PC-9 (cell line): ENCODE measurements at regions of chr2 and their contacts with region 1.

Region 1: GRCh38 chr2:157182834-157183396 is 74.6 kb upstream of the GALNT5 start:
- DNase-seq: peak in 1 of 2 experiments; percentile 36
- H3K4me3 ChIP-seq: no peak overlapping the region
- H3K27ac ChIP-seq: no peak overlapping the region
- H3K4me1 ChIP-seq: no peaks in the 10 kb centered on the region; the same call in 1 of the 2 replicates
- H3K27me3 ChIP-seq: no peaks in the 10 kb centered on the region
- CTCF ChIP-seq: no peak

Region 2: DNA sequence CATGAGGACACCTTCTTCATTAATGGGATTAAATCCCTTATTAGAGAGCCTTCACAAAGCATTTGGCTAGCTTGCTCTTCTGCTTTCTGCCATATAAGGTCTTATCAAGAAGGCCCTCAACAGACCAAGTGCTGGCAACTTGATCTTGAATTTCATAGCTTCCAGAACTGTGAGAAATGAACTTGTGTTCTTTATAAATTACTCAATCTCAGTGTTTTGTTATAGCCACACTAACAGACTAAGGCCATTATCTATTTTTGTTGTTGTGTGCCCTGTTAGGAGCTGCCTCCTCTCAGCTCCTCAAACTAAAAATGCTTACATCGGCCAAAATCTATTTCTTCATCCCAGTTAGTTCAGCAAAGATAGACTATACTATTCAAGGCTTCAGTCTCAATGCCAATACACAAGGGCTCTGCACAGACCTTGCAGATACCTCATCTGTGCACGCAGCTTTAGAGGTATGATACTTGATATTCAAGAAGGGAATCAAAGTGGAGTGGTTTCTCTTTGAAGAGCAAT is 563.8 kb before region 1 on chr2:
- CTCF ChIA-PET with region 1: no interaction called
- POLR2A ChIA-PET with region 1: interaction called, 10 read pairs
- intact Hi-C with region 1: no loop called
- DNase-seq: no peak
- H3K4me3 ChIP-seq: no peak overlapping the region
- H3K27ac ChIP-seq: no peak overlapping the region
- H3K4me1 ChIP-seq: no peaks in the 10 kb centered on the region
- H3K27me3 ChIP-seq: no peaks in the 10 kb centered on the region
- CTCF ChIP-seq: no peak

Region 3: DNA sequence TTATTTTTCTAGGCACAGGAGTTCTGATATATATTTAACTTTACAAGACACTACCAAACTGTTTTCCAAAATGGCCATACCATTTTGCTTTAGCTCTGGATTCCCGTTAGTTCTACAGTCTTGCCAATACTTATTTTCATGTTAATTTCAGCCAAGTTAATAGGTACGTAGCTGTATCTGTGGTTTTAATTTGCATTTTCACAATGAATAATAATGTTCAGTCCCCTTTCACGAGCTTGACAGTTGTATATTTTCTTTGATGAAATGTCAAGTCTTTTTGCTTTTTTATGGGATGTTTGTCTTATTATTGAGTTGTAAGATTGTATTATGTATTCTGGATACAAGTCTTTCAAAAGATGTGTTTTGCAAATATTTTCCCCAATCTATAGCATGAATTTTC is 24.0 kb after region 1 on chr2:
- CTCF ChIA-PET with region 1: no interaction called
- POLR2A ChIA-PET with region 1: no interaction called
- intact Hi-C with region 1: no loop called
- DNase-seq: no peak
- H3K4me3 ChIP-seq: no peak overlapping the region
- H3K27ac ChIP-seq: no peak overlapping the region
- H3K4me1 ChIP-seq: no peaks in the 10 kb centered on the region
- H3K27me3 ChIP-seq: no peaks in the 10 kb centered on the region
- CTCF ChIP-seq: no peak

Region 4: DNA sequence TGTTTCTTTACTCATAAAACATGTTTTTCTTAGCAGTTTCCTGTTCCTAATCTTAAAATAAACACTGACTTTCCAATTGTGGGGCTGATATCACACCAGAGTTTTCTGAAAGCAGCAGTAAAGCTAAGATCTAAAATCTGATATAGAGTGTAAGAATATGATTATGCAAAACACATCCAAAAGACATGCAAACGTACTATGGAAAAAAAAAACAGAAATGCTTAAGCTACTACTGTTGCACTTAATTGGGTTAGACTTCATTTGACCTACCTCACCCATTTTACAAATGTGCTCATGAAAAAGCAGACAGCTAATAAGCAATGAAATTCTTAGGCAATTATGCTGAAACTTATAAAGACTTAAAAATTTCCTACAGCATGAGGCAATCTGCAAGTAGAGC is 250.5 kb after region 1 on chr2:
- CTCF ChIA-PET with region 1: no interaction called
- POLR2A ChIA-PET with region 1: no interaction called
- intact Hi-C with region 1: no loop called
- DNase-seq: no peak
- H3K4me3 ChIP-seq: no peak overlapping the region
- H3K27ac ChIP-seq: no peak overlapping the region
- H3K4me1 ChIP-seq: no peaks in the 10 kb centered on the region
- H3K27me3 ChIP-seq: no peaks in the 10 kb centered on the region
- CTCF ChIP-seq: no peak